Lower leg skin (tissue), 4 donors: ENCODE measurements at regions of chr10 and their contacts with region 1.

Region 1: DNA sequence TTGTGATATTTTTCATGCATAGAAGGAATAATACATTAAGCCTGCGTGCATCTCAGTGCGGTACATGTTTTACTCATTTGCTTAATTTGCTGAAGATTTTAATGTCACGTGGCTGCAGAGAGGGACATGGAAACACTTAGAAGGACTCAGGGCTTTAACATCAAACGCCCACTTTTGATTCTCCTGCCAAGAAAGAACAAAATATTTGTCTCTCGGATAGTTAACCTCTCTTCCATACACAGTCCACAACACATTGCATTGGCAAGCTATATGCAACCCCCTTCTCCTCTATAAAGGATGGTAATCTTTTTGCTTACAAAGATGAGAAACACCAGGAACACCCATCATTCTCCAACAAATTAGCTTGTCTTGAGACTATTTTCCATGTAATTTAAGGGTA is 148.0 kb upstream of the NRP1 start:
- DNase-seq: no peak
- H3K4me3 ChIP-seq: no peak overlapping the region
- CTCF ChIP-seq: no peak
- POLR2A ChIP-seq: no peak

Region 2: DNA sequence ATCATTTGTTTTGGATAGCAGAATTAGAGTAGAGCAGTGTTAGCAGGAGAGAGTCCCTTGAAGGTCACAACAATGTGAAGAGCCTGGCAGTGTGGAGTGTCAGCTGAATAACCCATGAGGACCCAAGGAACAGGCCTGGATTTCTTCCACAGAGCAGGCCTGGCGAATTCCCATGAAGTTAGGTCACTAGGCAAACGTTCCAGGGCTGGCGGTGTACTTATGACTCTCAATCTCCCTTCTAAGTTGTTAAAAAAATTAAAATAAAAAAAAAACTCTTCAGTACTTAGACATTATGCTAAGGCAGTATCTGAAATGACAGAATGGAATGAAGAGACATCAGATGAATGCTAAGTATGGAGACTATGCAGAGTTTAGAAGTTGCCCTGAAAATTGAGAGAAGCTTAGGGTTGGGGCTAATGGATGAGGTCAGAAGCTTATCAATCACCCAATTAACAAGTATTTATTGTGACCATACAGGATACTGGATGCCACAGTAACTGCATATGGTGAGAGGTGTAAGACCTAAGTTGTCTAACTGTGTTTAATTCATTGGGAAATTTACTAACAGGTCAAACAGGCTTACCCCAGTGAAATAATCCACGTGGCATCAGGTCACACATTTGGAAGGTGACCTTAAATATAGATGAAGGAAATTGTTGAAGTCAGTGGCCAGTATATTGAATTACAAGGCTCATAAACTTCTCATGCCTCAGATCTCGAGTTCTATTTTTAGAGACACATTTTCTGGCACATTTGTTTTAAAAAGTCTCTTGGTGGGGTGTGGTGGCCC is 21.8 kb before region 1 on chr10:
- intact Hi-C with region 1: loop called (anchors 1 kb)
- DNase-seq: peak in 1 of 2 donors; percentile 59
- H3K4me3 ChIP-seq: no peak overlapping the region
- CTCF ChIP-seq: no peak
- POLR2A ChIP-seq: no peak

Region 3: DNA sequence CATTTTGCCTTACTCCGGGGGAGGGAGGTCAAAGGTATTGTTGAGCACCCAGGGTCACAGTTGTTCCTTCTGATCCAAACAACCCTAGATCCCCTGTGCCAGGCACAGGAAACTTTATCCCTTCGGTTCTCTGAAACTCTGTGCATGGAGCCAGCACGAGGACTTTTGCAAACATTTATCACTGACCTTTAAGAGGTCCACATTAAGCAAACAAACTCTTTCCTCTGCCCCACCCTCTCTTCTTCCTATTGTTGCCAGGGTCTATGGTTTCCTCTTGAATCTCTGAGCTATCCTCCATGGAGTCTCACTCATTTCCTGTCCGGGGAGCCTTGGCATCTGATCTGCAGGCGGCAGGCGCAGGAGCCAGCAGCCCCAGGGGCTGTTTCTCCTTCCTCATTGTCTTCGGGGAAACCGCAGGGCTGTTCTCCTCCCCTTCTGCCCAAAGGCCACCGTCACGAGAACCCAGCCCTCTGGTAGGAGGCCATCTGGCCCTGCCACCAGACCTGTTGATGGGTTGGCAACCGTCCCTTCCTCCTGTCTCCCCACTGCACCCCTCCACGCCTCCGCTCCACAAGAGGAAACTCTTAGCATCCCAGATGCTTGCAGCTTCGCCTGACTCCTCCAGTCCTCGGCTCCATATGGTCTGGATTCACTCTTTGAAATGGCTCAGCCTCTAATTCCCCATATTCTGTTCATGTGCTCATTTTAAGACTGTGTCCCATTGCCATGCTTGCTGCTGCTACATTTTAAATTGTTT is 179.3 kb after region 1 on chr10:
- intact Hi-C with region 1: no loop called
- DNase-seq: peak; percentile 67 to 92
- H3K4me3 ChIP-seq: no peak overlapping the region
- CTCF ChIP-seq: no peak
- POLR2A ChIP-seq: no peak